ENCODE measurements at regions of chr10 and their contacts with region 1.

Region 1: GRCh38 chr10:78972947-78973900 is 95.5 kb upstream of the ZMIZ1 start:
- DNase-seq: peak; percentile 65
- H3K4me3 Mint-ChIP-seq: peak overlapping the region; percentile 41
- H3K27ac Mint-ChIP-seq: peak overlapping the region; percentile 73
- H3K4me1 Mint-ChIP-seq: peaks cover 26% of the 10 kb centered on the region
- H3K27me3 Mint-ChIP-seq: no peaks in the 10 kb centered on the region

Region 2: GRCh38 chr10:78029269-78030226 is 943.7 kb before region 1 on chr10 and contains the start of gene POLR3A:
- intact Hi-C with region 1: loop called (anchors 5 kb)
- DNase-seq: peak; percentile 90
- H3K4me3 Mint-ChIP-seq: peak within 1 kb of the TSS; percentile 99
- H3K27ac Mint-ChIP-seq: peak within 1 kb of the TSS; percentile 94
- H3K4me1 Mint-ChIP-seq: peaks cover 22% of the 10 kb centered on the region
- H3K27me3 Mint-ChIP-seq: no peaks in the 10 kb centered on the region
- total RNA-seq, gene POLR3A: 23.5 and 24.2 TPM in 2 replicates

Region 3: DNA sequence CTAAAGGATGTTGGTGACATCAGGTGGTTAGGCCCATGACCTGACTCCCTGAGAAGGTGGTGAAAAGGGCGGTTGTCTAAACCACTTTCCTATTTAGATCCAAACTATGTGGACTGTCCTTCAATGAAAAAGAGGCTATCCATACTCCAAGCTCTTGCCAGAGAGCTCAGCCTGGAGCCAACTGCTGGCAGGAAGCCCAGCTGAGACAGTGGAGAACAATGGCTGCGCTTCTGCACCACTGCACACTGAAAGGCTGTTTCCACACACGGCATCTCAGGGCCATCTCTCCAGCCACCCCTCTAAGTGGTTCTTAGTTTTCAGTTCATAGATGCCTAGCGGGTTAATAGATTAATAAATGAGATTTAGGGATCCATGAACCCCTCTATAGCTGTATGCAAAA is 393.2 kb before region 1 on chr10:
- intact Hi-C with region 1: loop called (anchors 1 kb)
- DNase-seq: no peak
- H3K4me3 Mint-ChIP-seq: no peak overlapping the region
- H3K27ac Mint-ChIP-seq: no peak overlapping the region
- H3K4me1 Mint-ChIP-seq: peaks cover 18% of the 10 kb centered on the region
- H3K27me3 Mint-ChIP-seq: peaks cover 2% of the 10 kb centered on the region

Region 4: DNA sequence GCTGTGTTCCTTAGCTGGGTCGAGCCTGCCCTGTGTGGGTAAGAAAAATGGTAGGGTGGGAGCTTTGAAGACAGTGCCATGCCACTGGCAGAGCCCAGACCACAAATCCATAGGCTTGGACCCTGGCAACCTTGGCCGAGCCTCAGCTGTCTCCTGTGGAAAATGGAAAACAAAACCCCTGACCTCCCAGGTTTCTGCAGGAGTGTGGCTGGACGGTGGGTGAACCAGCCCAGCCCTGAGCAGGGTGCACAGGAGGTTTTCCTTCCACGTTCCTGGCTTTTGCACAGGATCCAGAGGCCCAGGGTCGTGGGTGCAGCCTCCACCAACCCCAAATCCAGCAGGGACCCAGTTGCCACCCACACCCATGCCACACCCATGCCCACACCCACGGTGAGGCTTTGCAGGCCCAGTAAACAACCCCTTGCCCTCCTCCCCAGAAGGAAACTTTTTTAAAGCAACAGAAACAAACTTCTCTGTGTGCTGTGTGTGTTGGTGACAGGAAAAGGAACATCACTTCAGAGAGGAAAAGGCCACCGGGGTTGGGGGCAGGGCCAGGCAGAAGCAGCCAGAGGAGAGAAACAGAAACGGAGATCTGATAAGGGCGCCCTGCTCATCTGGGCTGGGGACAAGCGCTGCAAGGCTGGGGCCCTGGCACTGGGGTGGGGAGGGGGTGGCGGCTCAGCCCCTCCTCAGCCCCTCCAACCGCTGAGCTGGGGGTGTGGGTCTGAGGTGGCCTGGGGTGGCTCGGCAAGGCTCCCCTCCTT is 74.8 kb after region 1 on chr10:
- intact Hi-C with region 1: loop called (anchors 5 kb)
- DNase-seq: peak; percentile 75
- H3K4me3 Mint-ChIP-seq: peak overlapping the region; percentile 69
- H3K27ac Mint-ChIP-seq: peak overlapping the region; percentile 97
- H3K4me1 Mint-ChIP-seq: peaks cover 35% of the 10 kb centered on the region
- H3K27me3 Mint-ChIP-seq: peaks cover 3% of the 10 kb centered on the region

Region 5: GRCh38 chr10:79137826-79138225 is 164.6 kb after region 1 on chr10:
- intact Hi-C with region 1: loop called (anchors 2 kb)
- DNase-seq: peak; percentile 50
- H3K4me3 Mint-ChIP-seq: peak overlapping the region; percentile 62
- H3K27ac Mint-ChIP-seq: peak overlapping the region; percentile 91
- H3K4me1 Mint-ChIP-seq: peaks cover 39% of the 10 kb centered on the region
- H3K27me3 Mint-ChIP-seq: no peaks in the 10 kb centered on the region

Region 6: GRCh38 chr10:79331709-79332108 is 358.5 kb after region 1 on chr10:
- intact Hi-C with region 1: loop called (anchors 10 kb)
- DNase-seq: peak; percentile 71
- H3K4me3 Mint-ChIP-seq: peak overlapping the region; percentile 11
- H3K27ac Mint-ChIP-seq: peak overlapping the region; percentile 90
- H3K4me1 Mint-ChIP-seq: peaks cover 37% of the 10 kb centered on the region
- H3K27me3 Mint-ChIP-seq: no peaks in the 10 kb centered on the region